HEK293 (cell line): ENCODE measurements at regions of chr22 and their contacts with region 1.

Region 1: GRCh38 chr22:41589391-41590241 is at the start of gene PMM1:
- H3K4me3 ChIP-seq: peak within 1 kb of the TSS; percentile 90
- H3K27ac ChIP-seq: peak within 1 kb of the TSS; percentile 61
- H3K4me1 ChIP-seq: peaks cover 12% of the 10 kb centered on the region
- CTCF ChIP-seq: peak; percentile 81; the same call in 1 of the 2 replicates

Region 2: GRCh38 chr22:41381329-41382097 is 208.1 kb before region 1 on chr22 and contains the start of gene TEF:
- CTCF ChIA-PET with region 1: no interaction called
- POLR2A ChIA-PET with region 1: interaction called, 17 read pairs
- H3K4me3 ChIP-seq: peak within 1 kb of the TSS; percentile 66
- H3K27ac ChIP-seq: peak within 1 kb of the TSS; percentile 75
- H3K4me1 ChIP-seq: peaks cover 9% of the 10 kb centered on the region
- CTCF ChIP-seq: no peak

Region 3: DNA sequence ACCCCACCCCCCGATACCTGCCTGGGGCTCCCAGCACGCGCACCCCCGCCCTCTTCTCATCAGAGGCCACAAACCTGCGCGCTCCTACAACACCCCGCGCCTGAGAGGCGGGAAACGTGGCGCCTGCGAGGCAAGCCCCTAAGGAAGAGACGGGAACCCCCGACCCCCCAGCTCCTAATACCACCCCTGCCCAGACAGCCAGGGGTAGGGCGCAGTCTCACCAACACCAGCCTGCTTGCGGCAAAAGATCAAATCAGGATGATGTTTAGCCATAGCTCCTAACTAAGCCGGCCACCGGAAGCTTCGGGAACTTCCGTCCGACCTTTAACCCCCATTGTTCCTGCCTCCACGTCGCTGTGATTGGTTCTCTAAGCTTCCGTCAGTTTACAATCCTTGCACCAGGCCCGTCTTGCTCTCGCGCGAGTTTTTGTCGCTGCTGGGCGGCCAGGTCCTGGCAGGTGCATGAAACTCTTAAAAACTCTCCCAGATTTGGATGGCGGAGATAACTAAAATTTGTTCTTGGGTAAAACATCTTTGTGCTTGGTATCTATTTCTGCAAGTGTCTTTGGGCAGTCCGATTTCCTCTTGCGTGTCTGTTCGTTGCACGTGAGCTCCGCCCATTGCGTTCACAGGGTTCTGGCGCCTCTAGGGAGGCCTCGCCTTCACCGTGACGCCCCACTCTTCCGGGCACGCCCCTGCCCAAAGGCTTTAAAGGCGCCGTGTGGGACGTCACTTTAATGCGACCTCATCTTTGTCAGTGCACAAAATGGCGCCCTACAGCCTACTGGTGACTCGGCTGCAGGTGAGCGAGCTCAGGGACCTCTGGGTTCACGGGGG is 121.0 kb before region 1 on chr22 and contains the starts of genes ACO2 and PHF5A:
- CTCF ChIA-PET with region 1: no interaction called
- POLR2A ChIA-PET with region 1: interaction called, 11 read pairs
- H3K4me3 ChIP-seq: peak within 1 kb of the TSS; percentile 90
- H3K27ac ChIP-seq: peak within 1 kb of the TSS; percentile 84
- H3K4me1 ChIP-seq: no peaks in the 10 kb centered on the region
- CTCF ChIP-seq: no peak

Region 4: DNA sequence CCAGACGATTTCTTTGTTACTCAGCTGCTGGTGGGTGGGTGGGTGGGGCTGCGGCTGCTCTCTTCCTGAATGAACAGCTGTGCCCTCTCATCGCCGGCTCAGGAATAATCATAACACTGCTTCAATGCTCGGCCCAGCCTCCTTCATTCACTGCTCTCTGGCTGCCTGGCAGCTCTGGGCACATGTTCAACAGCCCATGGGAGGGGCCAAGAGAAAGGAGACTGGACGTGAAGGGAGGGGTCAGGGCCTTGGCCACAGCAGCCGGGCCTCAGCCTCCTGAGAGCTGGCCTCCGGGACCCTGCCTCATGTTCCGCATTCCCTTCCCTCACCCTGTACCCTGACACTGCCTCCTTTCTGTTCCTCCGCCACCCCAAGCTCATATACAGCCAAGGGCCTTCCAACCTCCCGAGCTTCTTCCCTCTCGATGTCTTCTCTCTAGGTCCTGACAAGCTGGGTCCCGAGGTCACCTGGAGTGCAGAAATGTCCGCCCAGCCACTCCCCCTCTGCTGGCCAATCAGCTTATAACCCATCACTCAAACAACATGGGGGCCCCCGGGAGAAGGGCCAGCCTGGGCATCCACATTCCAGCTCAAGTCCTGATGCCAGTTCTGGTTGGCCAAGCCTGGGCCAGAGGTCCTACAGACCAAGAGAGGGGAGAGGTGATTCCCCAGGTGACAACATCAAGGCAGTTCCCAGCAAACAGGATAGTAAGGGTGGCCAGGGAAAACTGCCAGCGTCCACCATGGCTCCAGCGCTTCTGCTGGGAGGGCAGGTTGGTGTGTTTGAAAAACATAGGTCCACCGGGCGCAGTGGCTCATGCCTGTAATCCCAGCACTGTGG is 32.0 kb before region 1 on chr22:
- CTCF ChIA-PET with region 1: interaction called, 5 read pairs
- POLR2A ChIA-PET with region 1: interaction called, 105 read pairs
- H3K4me3 ChIP-seq: no peak overlapping the region
- H3K27ac ChIP-seq: no peak overlapping the region
- H3K4me1 ChIP-seq: no peaks in the 10 kb centered on the region; the same call in 1 of the 2 replicates
- CTCF ChIP-seq: no peak

Region 5: DNA sequence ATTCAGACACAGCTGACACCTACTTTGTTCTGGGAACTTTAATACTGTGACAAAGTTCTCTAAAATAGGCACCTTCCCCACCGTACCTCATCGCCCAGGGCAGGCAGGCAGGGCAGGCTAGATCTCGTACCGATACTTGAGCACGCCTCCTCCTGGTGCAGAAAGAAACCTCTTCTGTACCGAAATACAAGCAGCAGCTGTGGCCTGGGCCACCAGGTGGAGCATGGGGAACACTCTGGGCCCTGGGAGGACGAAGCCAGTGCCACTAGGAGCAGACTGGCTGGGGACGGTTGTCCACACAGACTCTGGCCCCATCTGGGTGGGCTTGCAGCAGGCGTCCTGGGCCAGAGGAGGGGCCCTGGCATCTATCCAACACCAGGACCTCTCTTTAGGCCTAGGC is 12.7 kb before region 1 on chr22:
- CTCF ChIA-PET with region 1: interaction called, 23 read pairs
- POLR2A ChIA-PET with region 1: interaction called, 85 read pairs
- H3K4me3 ChIP-seq: no peak overlapping the region
- H3K27ac ChIP-seq: no peak overlapping the region
- H3K4me1 ChIP-seq: no peaks in the 10 kb centered on the region
- CTCF ChIP-seq: peak; percentile 89

Region 6: GRCh38 chr22:41613456-41613855 is 23.8 kb after region 1 on chr22:
- CTCF ChIA-PET with region 1: interaction called, 3 read pairs
- POLR2A ChIA-PET with region 1: interaction called, 16 read pairs
- H3K4me3 ChIP-seq: no peak overlapping the region
- H3K27ac ChIP-seq: no peak overlapping the region
- H3K4me1 ChIP-seq: no peaks in the 10 kb centered on the region; the same call in 1 of the 2 replicates
- CTCF ChIP-seq: no peak

Region 7: GRCh38 chr22:41688365-41689211 is 99.0 kb after region 1 on chr22 and contains the start of gene SNU13:
- CTCF ChIA-PET with region 1: no interaction called
- POLR2A ChIA-PET with region 1: interaction called, 12 read pairs
- H3K4me3 ChIP-seq: peak within 1 kb of the TSS; percentile 87
- H3K27ac ChIP-seq: peak within 1 kb of the TSS; percentile 92
- H3K4me1 ChIP-seq: no peaks in the 10 kb centered on the region
- CTCF ChIP-seq: peak; percentile 66; the same call in 1 of the 2 replicates

Region 8: GRCh38 chr22:41725510-41726110 is 136.0 kb after region 1 on chr22:
- CTCF ChIA-PET with region 1: no interaction called
- POLR2A ChIA-PET with region 1: no interaction called
- H3K4me3 ChIP-seq: no peak overlapping the region
- H3K27ac ChIP-seq: no peak overlapping the region
- H3K4me1 ChIP-seq: no peaks in the 10 kb centered on the region
- CTCF ChIP-seq: no peak